CD4-positive, alpha-beta T cell (primary cell): ENCODE measurements at regions of chr3 and their contacts with region 1.

Region 1: DNA sequence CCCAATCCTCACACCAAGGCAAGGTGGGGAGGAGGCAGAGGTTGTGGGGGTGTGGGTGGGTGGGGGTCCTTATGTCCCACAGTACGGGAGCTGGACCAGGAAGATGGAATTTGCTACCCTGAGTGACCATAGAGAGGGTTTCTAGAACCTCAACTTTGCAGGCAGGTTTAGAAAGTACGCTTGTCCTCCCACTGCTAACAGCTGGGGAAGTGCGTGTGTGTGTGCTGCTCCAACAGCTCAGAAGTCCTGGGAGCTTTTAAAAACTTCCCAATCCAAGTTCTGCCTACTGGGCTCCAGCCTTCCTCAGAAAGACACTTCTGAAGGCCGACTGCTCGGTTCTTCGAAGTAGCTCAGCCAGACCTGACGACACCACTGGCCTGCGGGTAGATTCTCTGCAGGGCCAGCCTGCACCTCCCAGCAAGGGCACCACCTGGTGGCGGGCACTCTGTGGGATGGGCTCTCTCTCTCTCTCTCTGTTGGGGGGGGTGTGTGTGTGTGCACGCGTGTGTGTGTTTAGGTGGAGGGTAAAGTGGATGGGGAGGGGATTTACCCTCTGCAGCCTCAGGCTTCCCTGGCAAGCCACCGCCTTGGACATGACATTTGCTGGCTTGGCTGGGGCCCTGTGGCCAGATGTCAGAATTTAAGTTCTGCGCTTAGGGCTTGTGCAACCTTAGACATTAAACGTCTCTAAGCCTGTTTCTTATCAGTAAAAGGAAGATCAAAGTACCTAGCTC is 15.6 kb downstream of the TMEM158 start:
- DNase-seq: peak; percentile 76 to 90 (median 81)
- ATAC-seq: peak; percentile 98
- H3K4me3 ChIP-seq: no peak overlapping the region
- H3K4me3 Mint-ChIP-seq: no peak overlapping the region
- H3K27ac ChIP-seq: no peak overlapping the region
- H3K27ac Mint-ChIP-seq: no peak overlapping the region
- H3K4me1 ChIP-seq: peaks cover 17% of the 10 kb centered on the region
- H3K4me1 Mint-ChIP-seq: peaks cover 25% of the 10 kb centered on the region
- H3K27me3 ChIP-seq: peaks cover 4 to 10% of the 10 kb centered on the region in 2 experiments
- H3K27me3 Mint-ChIP-seq: peaks cover 5% of the 10 kb centered on the region
- CTCF ChIP-seq: peak; percentile 85

Region 2: GRCh38 chr3:45043728-45044299 is 166.7 kb before region 1 on chr3:
- CTCF ChIA-PET with region 1: interaction called, 56 read pairs
- POLR2A ChIA-PET with region 1: interaction called, 20 read pairs
- intact Hi-C with region 1: loop called (anchors 1 kb)
- DNase-seq: peak in 2 of 14 experiments; percentile 43 to 51
- ATAC-seq: no peak
- H3K4me3 ChIP-seq: no peak overlapping the region
- H3K4me3 Mint-ChIP-seq: no peak overlapping the region
- H3K27ac ChIP-seq: no peak overlapping the region
- H3K27ac Mint-ChIP-seq: no peak overlapping the region
- H3K4me1 ChIP-seq: peaks cover 17% of the 10 kb centered on the region
- H3K4me1 Mint-ChIP-seq: peaks cover 21% of the 10 kb centered on the region
- H3K27me3 ChIP-seq: peaks cover 0 to 7% of the 10 kb centered on the region in 2 experiments
- H3K27me3 Mint-ChIP-seq: no peaks in the 10 kb centered on the region
- CTCF ChIP-seq: no peak

Region 3: GRCh38 chr3:45078910-45079522 is 131.5 kb before region 1 on chr3:
- CTCF ChIA-PET with region 1: no interaction called
- POLR2A ChIA-PET with region 1: no interaction called
- intact Hi-C with region 1: loop called (anchors 1 kb)
- DNase-seq: peak in 4 of 14 experiments; percentile 12 to 43 (median 29)
- ATAC-seq: peak; percentile 62
- H3K4me3 ChIP-seq: no peak overlapping the region
- H3K4me3 Mint-ChIP-seq: peak overlapping the region; percentile 48
- H3K27ac ChIP-seq: no peak overlapping the region
- H3K27ac Mint-ChIP-seq: no peak overlapping the region
- H3K4me1 ChIP-seq: no peaks in the 10 kb centered on the region
- H3K4me1 Mint-ChIP-seq: peaks cover 17% of the 10 kb centered on the region
- H3K27me3 ChIP-seq: peaks cover 0 to 2% of the 10 kb centered on the region in 2 experiments
- H3K27me3 Mint-ChIP-seq: peaks cover 7% of the 10 kb centered on the region
- CTCF ChIP-seq: peak; percentile 29